ENCODE measurements at regions of chr11 and their contacts with region 1.

Region 1: DNA sequence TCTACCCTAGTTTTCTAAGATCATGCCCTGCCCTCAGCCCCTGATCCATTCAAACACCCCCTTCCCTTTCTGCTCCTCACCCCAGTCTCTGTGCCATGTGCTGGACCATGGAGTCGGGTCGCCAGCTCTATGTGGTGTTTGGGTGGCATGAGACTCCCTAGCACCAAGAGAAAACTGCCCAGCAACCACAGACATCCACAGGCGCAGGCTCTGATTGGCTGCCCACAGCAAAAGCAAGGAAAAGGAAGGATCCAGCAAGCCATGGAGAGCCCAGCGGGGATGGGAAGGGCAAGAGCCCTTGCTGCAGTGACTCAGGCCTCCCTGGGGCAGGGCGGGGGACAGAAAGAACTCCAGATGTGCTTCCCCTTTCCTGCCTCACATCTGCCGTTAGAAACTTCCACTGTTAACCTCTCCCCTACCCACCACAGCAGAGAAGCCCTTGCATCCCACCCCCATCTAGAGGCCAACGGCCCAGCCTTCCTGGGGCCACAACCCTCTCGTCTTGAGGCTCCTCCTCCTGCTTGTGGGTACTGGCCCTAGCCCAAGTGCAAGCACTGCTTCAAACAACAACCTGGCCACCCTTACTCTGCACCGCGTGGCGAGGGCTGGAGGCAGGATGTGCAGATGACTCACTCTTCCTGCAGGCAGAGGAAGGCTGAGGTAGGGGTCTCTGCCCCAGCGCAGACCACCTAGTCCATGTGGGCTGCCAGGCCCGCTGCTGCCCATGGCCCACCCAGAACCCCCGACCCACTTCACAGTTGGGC is 9.7 kb upstream of the AHNAK start:
- DNase-seq: peak; percentile 85 to 94 (median 90)
- ATAC-seq: peak; percentile 46 to 81 (median 71)
- H3K4me3 ChIP-seq: peak overlapping the region in 8 of 12 donors; percentile 2 to 40 (median 19)
- H3K27ac ChIP-seq: peak overlapping the region; percentile 65 to 98 (median 92)
- H3K4me1 ChIP-seq: peaks cover 18 to 96% (median 77%) of the 10 kb centered on the region in 12 donors
- H3K27me3 ChIP-seq: no peaks in the 10 kb centered on the region
- CTCF ChIP-seq: no peak
- POLR2A ChIP-seq: no peak

Region 2: GRCh38 chr11:62394825-62395538 is 161.3 kb before region 1 on chr11:
- intact Hi-C with region 1: loop called in 5 of 10 experiments (anchors 1 to 5 kb)
- DNase-seq: peak; percentile 78 to 88 (median 83)
- ATAC-seq: peak; percentile 71 to 84 (median 82)
- H3K4me3 ChIP-seq: peak overlapping the region in 11 of 12 donors; percentile 21 to 60 (median 45)
- H3K27ac ChIP-seq: peak overlapping the region in 11 of 12 donors; percentile 10 to 82 (median 67)
- H3K4me1 ChIP-seq: peaks cover 6 to 50% (median 36%) of the 10 kb centered on the region in 12 donors
- H3K27me3 ChIP-seq: no peaks in the 10 kb centered on the region
- CTCF ChIP-seq: peak; percentile 59 to 85 (median 74)
- POLR2A ChIP-seq: no peak

Region 3: DNA sequence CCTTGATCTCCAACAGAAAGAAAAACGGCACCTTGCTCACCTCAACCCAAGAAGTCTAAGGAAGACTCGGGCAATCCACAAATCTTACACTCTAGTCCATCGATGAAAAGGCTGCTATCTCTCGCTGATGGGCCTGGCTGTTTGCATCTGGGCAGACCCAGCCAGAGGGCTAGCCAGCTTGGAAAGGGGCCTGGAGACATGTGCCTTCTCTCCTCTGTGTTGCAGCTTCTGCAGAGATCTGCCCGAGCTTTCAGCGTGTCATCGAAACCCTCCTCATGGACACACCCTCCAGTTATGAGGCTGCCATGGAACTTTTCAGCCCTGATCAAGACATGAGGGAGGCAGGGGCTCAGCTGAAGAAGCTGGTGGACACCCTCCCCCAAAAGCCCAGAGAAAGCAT is 134.3 kb before region 1 on chr11:
- intact Hi-C with region 1: loop called (anchors 1 to 5 kb)
- DNase-seq: no peak
- ATAC-seq: no peak
- H3K4me3 ChIP-seq: no peak overlapping the region
- H3K27ac ChIP-seq: peak overlapping the region in 1 of 12 donors; percentile 16
- H3K4me1 ChIP-seq: peaks cover 0 to 18% (median 7%) of the 10 kb centered on the region in 12 donors
- H3K27me3 ChIP-seq: no peaks in the 10 kb centered on the region
- CTCF ChIP-seq: no peak
- POLR2A ChIP-seq: no peak

Region 4: DNA sequence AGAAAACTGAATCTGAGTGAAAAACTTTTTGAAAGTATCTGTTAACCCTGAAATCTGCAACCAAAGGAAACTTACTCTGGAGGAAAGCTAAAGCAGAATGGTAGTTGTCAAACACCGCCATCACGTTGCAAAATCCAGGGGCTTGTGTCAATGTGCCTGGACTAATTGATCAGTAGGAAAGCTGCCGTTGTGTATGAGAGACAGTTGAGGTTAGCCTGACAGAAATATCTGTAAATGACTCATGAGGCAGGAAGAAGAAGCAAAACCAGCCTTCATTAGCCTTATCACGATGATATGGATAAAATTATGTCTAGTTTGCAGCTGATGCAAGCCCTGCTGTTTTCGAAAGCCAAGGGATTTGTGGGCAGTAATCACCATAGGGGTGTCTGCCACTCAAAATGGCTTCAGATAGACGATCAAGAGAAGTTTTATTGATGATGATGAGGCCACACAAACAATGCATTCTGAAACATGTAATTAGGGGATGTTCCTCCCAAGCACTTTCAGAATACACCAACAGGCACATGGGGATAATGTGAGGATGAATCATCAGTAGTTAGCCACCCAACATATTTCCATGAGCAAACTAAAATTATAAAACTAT is 128.6 kb before region 1 on chr11:
- intact Hi-C with region 1: loop called (anchors 1 to 5 kb)
- DNase-seq: no peak
- ATAC-seq: no peak
- H3K4me3 ChIP-seq: no peak overlapping the region
- H3K27ac ChIP-seq: peak overlapping the region in 2 of 12 donors; percentile 78 to 84
- H3K4me1 ChIP-seq: peaks cover 0 to 62% (median 3%) of the 10 kb centered on the region in 12 donors
- H3K27me3 ChIP-seq: no peaks in the 10 kb centered on the region
- CTCF ChIP-seq: no peak
- POLR2A ChIP-seq: no peak

Region 5: DNA sequence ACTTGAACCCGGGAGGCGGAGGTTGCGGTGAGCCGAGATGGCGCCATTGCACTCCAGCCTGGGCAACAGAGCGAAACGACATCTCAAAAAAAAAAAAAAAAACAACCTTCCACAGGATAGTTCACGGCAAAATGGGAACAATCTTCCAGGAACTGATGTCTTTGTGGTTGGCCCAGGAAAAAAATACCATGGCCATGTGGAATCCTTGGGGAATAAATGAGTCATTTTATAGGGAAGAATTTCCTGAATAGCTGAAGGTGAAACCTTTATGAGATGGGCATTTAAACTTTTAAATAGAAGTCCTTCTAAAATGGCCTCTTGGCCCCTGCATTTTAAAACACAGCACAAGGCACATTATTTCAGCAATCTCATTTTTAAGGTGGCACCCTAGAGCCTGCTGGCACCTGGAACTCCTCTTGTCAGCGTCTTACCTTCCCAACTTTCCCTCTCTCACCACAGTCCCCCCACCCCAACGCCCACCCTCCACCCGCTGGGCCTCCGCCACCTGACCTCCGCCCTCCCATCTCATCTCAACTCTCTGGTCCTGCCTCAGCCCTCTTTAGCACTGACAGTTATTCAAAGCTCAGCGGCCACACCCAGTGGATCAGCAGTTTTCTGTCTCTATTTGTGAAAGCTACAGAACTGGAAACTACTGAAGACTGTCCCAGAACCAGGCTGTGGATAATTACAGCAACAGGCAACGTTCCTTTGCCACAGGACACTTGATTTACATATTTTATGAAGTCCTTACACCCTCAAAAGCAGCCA is 94.4 kb before region 1 on chr11:
- intact Hi-C with region 1: no loop called
- DNase-seq: no peak
- ATAC-seq: peak in 1 of 4 donors; percentile 38
- H3K4me3 ChIP-seq: no peak overlapping the region
- H3K27ac ChIP-seq: peak overlapping the region in 1 of 12 donors; percentile 52
- H3K4me1 ChIP-seq: peaks cover 0 to 38% (median 0%) of the 10 kb centered on the region in 12 donors
- H3K27me3 ChIP-seq: no peaks in the 10 kb centered on the region
- CTCF ChIP-seq: no peak
- POLR2A ChIP-seq: no peak

Region 6: GRCh38 chr11:62497132-62497915 is 59.0 kb before region 1 on chr11:
- intact Hi-C with region 1: loop called in 1 of 10 experiments (anchors 5 kb)
- DNase-seq: peak in 1 of 5 donors; percentile 18
- ATAC-seq: peak in 2 of 4 donors; percentile 26 to 51
- H3K4me3 ChIP-seq: no peak overlapping the region
- H3K27ac ChIP-seq: peak overlapping the region in 1 of 12 donors; percentile 22
- H3K4me1 ChIP-seq: peaks cover 0 to 46% (median 29%) of the 10 kb centered on the region in 12 donors
- H3K27me3 ChIP-seq: no peaks in the 10 kb centered on the region
- CTCF ChIP-seq: peak in 11 of 12 donors; percentile 21 to 52 (median 37)
- POLR2A ChIP-seq: no peak

Region 7: GRCh38 chr11:62573592-62574362 is 17.5 kb after region 1 on chr11 and contains the start of gene EEF1G:
- intact Hi-C with region 1: loop called in 1 of 10 experiments (anchors 1 kb)
- DNase-seq: peak; percentile 98 to 99 (median 99)
- ATAC-seq: peak; percentile 95 to 97 (median 96)
- H3K4me3 ChIP-seq: peak within 1 kb of the TSS; percentile 58 to 95 (median 76)
- H3K27ac ChIP-seq: peak within 1 kb of the TSS; percentile 61 to 98 (median 94)
- H3K4me1 ChIP-seq: peaks cover 7 to 72% (median 44%) of the 10 kb centered on the region in 12 donors
- H3K27me3 ChIP-seq: no peaks in the 10 kb centered on the region
- CTCF ChIP-seq: no peak
- POLR2A ChIP-seq: peak; percentile 33 to 95
- total RNA-seq, gene EEF1G: 799 to 1,135 (median 929) TPM

Region 8: GRCh38 chr11:62601394-62602140 is 45.3 kb after region 1 on chr11 and contains the start of gene MTA2:
- intact Hi-C with region 1: no loop called
- DNase-seq: peak; percentile 97 to 98 (median 98)
- ATAC-seq: peak; percentile 87 to 91 (median 90)
- H3K4me3 ChIP-seq: peak within 1 kb of the TSS; percentile 81 to 100 (median 90)
- H3K27ac ChIP-seq: peak within 1 kb of the TSS; percentile 91 to 100 (median 98)
- H3K4me1 ChIP-seq: peaks cover 4 to 41% (median 32%) of the 10 kb centered on the region in 12 donors
- H3K27me3 ChIP-seq: no peaks in the 10 kb centered on the region
- CTCF ChIP-seq: no peak
- POLR2A ChIP-seq: peak in 1 of 2 donors; percentile 60
- total RNA-seq, gene MTA2: 24.1 to 55.3 (median 33.7) TPM

Measured in heart left ventricle (tissue), 16 donors.